Endothelial cell of umbilical vein (primary cell): ENCODE measurements at regions of chr5 and their contacts with region 1.

Region 1: GRCh38 chr5:64634997-64635686 is 55.2 kb upstream of the SHISAL2B start:
- DNase-seq: peak; percentile 52
- H3K4me3 ChIP-seq: no peak overlapping the region
- H3K27ac ChIP-seq: no peak overlapping the region
- H3K4me1 ChIP-seq: peaks cover 4% of the 10 kb centered on the region
- H3K27me3 ChIP-seq: peaks cover 26 to 37% of the 10 kb centered on the region in 2 experiments
- CTCF ChIP-seq: peak; percentile 31 to 41
- POLR2A ChIP-seq: no peak

Region 2: DNA sequence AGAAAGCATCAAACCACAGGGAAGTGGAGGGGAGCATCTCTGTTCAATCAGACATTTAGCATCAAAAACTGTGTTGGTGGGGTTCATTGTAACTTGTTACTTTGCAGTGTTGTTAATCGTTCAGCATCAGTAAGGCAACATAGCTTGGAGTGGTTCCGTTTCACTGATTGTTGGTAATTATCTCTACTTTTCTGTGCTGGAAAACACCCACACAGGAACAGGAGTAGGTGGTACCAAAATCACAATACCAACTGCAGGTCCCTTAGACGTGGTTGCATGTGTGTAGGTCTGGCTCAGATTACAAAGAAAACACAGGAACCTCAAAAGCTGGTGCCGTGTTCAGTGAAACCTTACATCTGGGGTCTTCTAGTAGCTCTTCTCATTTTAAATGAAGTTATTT is 322.7 kb before region 1 on chr5:
- CTCF ChIA-PET with region 1: no interaction called
- POLR2A ChIA-PET with region 1: no interaction called
- dilution Hi-C with region 1: no loop called
- intact Hi-C with region 1: no loop called
- DNase-seq: no peak
- H3K4me3 ChIP-seq: no peak overlapping the region
- H3K27ac ChIP-seq: no peak overlapping the region
- H3K4me1 ChIP-seq: no peaks in the 10 kb centered on the region
- H3K27me3 ChIP-seq: no peaks in the 10 kb centered on the region
- CTCF ChIP-seq: no peak
- POLR2A ChIP-seq: no peak

Region 3: GRCh38 chr5:64958757-64959391 is 323.7 kb after region 1 on chr5:
- CTCF ChIA-PET with region 1: no interaction called
- POLR2A ChIA-PET with region 1: no interaction called
- dilution Hi-C with region 1: no loop called
- intact Hi-C with region 1: loop called (anchors 10 kb)
- DNase-seq: peak; percentile 43
- H3K4me3 ChIP-seq: no peak overlapping the region
- H3K27ac ChIP-seq: no peak overlapping the region
- H3K4me1 ChIP-seq: no peaks in the 10 kb centered on the region
- H3K27me3 ChIP-seq: no peaks in the 10 kb centered on the region
- CTCF ChIP-seq: peak; percentile 27 to 39
- POLR2A ChIP-seq: no peak

Region 4: GRCh38 chr5:65562731-65563701 is 927.9 kb after region 1 on chr5 and contains the starts of genes CENPK and PPWD1:
- CTCF ChIA-PET with region 1: no interaction called
- POLR2A ChIA-PET with region 1: no interaction called
- dilution Hi-C with region 1: no loop called
- intact Hi-C with region 1: loop called (anchors 1 kb)
- DNase-seq: peak; percentile 98
- H3K4me3 ChIP-seq: peak within 1 kb of the TSS; percentile 49 to 85 (median 72)
- H3K27ac ChIP-seq: peak within 1 kb of the TSS; percentile 71
- H3K4me1 ChIP-seq: peaks cover 25% of the 10 kb centered on the region
- H3K27me3 ChIP-seq: no peaks in the 10 kb centered on the region
- CTCF ChIP-seq: no peak
- POLR2A ChIP-seq: no peak
- total RNA-seq, gene CENPK: 49.3 and 50.7 TPM in 2 replicates
- total RNA-seq, gene PPWD1: 40.9 and 41.9 TPM in 2 replicates